Tibial artery (tissue), 4 donors: ENCODE measurements at regions of chr2 and their contacts with region 1.

Region 1: GRCh38 chr2:211157856-211158463 is 601.6 kb downstream of the CPS1 start:
- DNase-seq: peak; percentile 76 to 80
- H3K4me3 ChIP-seq: no peak overlapping the region
- H3K27ac ChIP-seq: no peak overlapping the region
- H3K4me1 ChIP-seq: no peaks in the 10 kb centered on the region
- H3K27me3 ChIP-seq: no peaks in the 10 kb centered on the region
- CTCF ChIP-seq: peak; percentile 71 to 79

Region 2: GRCh38 chr2:210617732-210618330 is 540.1 kb before region 1 on chr2:
- intact Hi-C with region 1: loop called (anchors 10 kb)
- DNase-seq: no peak
- H3K4me3 ChIP-seq: no peak overlapping the region
- H3K27ac ChIP-seq: no peak overlapping the region
- H3K4me1 ChIP-seq: peaks cover 0 to 23% (median 0%) of the 10 kb centered on the region in 4 donors
- H3K27me3 ChIP-seq: no peaks in the 10 kb centered on the region
- CTCF ChIP-seq: peak; percentile 50 to 60